ENCODE measurements at regions of chrX and their contacts with region 1.

Region 1: GRCh38 chrX:154714925-154715324 is 36.0 kb downstream of the GAB3 start:
- DNase-seq: peak in 7 of 9 donors; percentile 28 to 64 (median 57)
- ATAC-seq: peak; percentile 59
- H3K4me3 ChIP-seq: no peak overlapping the region
- H3K4me3 Mint-ChIP-seq: no peak overlapping the region
- H3K27ac ChIP-seq: no peak overlapping the region
- H3K27ac Mint-ChIP-seq: peak overlapping the region in 2 of 9 donors; percentile 16 to 76
- H3K4me1 ChIP-seq: peaks cover 33 to 62% of the 10 kb centered on the region in 2 donors
- H3K4me1 Mint-ChIP-seq: peaks cover 37 to 69% (median 45%) of the 10 kb centered on the region in 7 donors
- H3K27me3 ChIP-seq: no peaks in the 10 kb centered on the region
- H3K27me3 Mint-ChIP-seq: no peaks in the 10 kb centered on the region

Region 2: GRCh38 chrX:154734061-154734781 is 19.3 kb after region 1 on chrX:
- CTCF ChIA-PET with region 1: interaction called, 8 read pairs
- POLR2A ChIA-PET with region 1: interaction called, 10 read pairs
- intact Hi-C with region 1: loop called (anchors 1 to 2 kb)
- DNase-seq: peak in 4 of 9 donors; percentile 17 to 33 (median 28)
- ATAC-seq: peak; percentile 72
- H3K4me3 ChIP-seq: no peak overlapping the region
- H3K4me3 Mint-ChIP-seq: peak overlapping the region; percentile 34 to 87 (median 78)
- H3K27ac ChIP-seq: peak overlapping the region; percentile 40
- H3K27ac Mint-ChIP-seq: peak overlapping the region; percentile 81 to 95 (median 89)
- H3K4me1 ChIP-seq: peaks cover 43 to 75% of the 10 kb centered on the region in 2 donors
- H3K4me1 Mint-ChIP-seq: peaks cover 42 to 93% (median 89%) of the 10 kb centered on the region in 7 donors
- H3K27me3 ChIP-seq: no peaks in the 10 kb centered on the region
- H3K27me3 Mint-ChIP-seq: no peaks in the 10 kb centered on the region

Region 3: DNA sequence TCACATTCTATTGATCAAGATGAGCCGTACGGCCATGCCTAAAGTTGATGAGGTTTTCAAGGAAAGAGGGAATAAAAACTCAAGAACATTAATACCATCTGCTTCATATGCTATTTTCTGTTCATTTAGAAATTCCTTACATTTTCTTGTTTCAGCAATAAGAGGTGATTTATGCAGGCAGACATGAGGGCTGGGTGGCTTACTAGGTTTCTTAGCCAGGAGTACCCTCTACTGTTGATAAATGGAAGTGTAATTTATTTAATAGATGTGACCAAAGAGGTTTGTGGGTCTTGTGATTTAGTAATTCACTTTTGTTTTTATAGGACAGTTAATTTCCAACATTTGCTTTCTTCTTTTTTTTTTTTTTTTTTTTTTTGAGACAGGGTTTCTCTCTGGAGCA is 125.9 kb after region 1 on chrX:
- CTCF ChIA-PET with region 1: interaction called, 3 read pairs
- POLR2A ChIA-PET with region 1: no interaction called
- intact Hi-C with region 1: loop called in 1 of 2 experiments (anchors 1 kb)
- DNase-seq: peak in 7 of 9 donors; percentile 2 to 50 (median 34)
- ATAC-seq: peak; percentile 69
- H3K4me3 ChIP-seq: no peak overlapping the region
- H3K4me3 Mint-ChIP-seq: no peak overlapping the region
- H3K27ac ChIP-seq: no peak overlapping the region
- H3K27ac Mint-ChIP-seq: no peak overlapping the region
- H3K4me1 ChIP-seq: no peaks in the 10 kb centered on the region
- H3K4me1 Mint-ChIP-seq: peaks cover 0 to 11% (median 0%) of the 10 kb centered on the region in 7 donors
- H3K27me3 ChIP-seq: no peaks in the 10 kb centered on the region
- H3K27me3 Mint-ChIP-seq: peaks cover 0 to 6% (median 0%) of the 10 kb centered on the region in 5 donors

Measured in naive thymus-derived CD4-positive, alpha-beta T cell (primary cell).